ENCODE measurements at regions of chr11 and their contacts with region 1.

Region 1: GRCh38 chr11:30346068-30346688 is 23.3 kb downstream of the ARL14EP start:
- DNase-seq: no peak
- H3K4me3 ChIP-seq: no peak overlapping the region
- H3K27ac ChIP-seq: no peak overlapping the region
- H3K4me1 ChIP-seq: no peaks in the 10 kb centered on the region
- H3K27me3 ChIP-seq: no peaks in the 10 kb centered on the region
- CTCF ChIP-seq: peak; percentile 23 to 88 (median 59)
- POLR2A ChIP-seq: no peak

Region 2: DNA sequence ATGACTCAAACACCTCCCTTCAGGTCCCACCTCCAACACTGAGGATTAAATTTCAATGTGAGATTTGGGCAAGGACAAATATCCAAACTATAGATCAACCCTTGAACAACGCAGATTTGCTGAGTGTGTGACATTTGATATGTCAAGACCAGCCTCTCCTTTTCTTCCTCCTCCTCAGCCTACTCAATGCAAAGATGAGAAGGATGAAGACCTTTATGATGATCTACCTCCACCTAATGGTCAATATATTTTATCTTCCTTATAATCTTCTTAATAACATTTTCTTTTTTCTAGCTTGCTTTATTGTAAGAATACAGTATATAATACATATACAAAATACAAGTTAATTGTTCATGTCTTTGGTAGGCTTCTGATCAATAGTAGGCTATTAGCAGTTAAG is 307.4 kb after region 1 on chr11:
- intact Hi-C with region 1: loop called (anchors 5 kb)
- DNase-seq: no peak
- H3K4me3 ChIP-seq: no peak overlapping the region
- H3K27ac ChIP-seq: no peak overlapping the region
- H3K4me1 ChIP-seq: no peaks in the 10 kb centered on the region
- H3K27me3 ChIP-seq: no peaks in the 10 kb centered on the region
- CTCF ChIP-seq: peak in 3 of 6 experiments; percentile 9 to 35 (median 24)
- POLR2A ChIP-seq: no peak

Region 3: DNA sequence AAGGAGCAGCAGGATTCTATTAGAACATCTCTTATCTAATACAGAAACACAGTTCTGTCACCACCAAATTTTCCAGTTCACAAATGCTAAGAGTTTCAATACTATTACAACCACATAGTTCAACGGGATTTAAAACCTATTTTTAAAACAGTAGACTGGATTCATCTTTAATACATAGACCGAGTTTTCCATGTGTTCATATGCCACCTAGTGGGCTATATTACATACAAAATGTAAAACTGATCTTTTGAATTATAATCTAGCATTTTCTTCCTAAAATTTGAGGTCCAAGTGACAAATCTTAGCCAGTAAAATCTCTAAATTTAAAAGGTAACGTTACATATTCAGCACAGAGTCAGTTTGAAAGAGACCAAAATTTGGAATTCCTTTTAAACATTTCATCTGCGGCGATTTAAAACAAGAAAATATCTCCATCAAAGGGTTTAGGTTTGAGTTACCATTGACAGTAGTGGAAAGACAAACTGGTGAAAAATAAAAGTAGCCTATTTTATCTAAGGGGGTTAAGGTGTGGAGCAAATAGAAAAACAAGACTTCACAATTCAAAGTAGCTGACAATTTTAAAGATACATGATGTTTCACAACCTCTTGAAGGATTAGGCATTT is 509.3 kb after region 1 on chr11:
- intact Hi-C with region 1: loop called (anchors 5 kb)
- DNase-seq: no peak
- H3K4me3 ChIP-seq: no peak overlapping the region
- H3K27ac ChIP-seq: no peak overlapping the region
- H3K4me1 ChIP-seq: no peaks in the 10 kb centered on the region
- H3K27me3 ChIP-seq: no peaks in the 10 kb centered on the region
- CTCF ChIP-seq: peak in 3 of 6 experiments; percentile 48 to 74 (median 64)
- POLR2A ChIP-seq: no peak

Region 4: GRCh38 chr11:30917859-30918478 is 571.8 kb after region 1 on chr11:
- intact Hi-C with region 1: loop called (anchors 10 kb)
- DNase-seq: no peak
- H3K4me3 ChIP-seq: no peak overlapping the region
- H3K27ac ChIP-seq: no peak overlapping the region
- H3K4me1 ChIP-seq: no peaks in the 10 kb centered on the region
- H3K27me3 ChIP-seq: no peaks in the 10 kb centered on the region
- CTCF ChIP-seq: peak in 4 of 6 experiments; percentile 51 to 66 (median 60)
- POLR2A ChIP-seq: no peak